ENCODE measurements at regions of chr1 and their contacts with region 1.

Region 1: DNA sequence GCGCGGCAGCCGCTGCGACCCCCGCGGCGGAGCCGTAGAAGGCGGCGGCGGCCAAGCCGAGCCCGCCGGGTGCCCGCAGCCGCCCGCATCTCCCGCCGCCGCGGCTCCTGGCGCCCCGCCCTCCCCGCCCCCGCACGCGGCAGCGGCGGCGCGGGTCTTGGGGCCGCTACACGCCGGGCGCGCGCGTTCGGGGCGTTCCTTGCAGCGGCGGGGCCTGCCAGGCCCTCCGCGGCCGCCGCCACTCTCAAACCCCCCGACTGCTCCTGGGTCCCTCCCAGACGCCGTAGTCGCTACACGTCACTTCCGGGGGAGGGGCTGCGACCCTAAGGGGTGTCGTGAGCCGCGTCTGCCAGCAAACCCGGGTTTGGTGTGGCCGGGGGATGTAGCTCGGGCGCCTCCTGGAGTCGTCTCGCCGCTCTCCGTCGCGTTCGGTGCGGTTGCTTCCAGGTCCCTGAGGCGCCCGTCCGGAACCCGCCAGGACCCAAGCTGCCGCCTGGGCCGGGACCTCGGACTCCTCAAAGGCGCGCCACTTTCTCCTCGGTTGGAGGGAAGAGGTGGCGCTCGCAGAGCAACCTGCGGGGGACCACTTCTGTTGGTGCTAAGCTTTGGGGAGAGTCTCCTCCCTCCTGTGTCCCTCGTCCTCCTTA is at the start of gene ELK4:
- DNase-seq: peak; percentile 99
- H3K4me3 Mint-ChIP-seq: peak within 1 kb of the TSS; percentile 96
- H3K27ac Mint-ChIP-seq: peak within 1 kb of the TSS; percentile 99
- H3K4me1 Mint-ChIP-seq: peaks cover 33% of the 10 kb centered on the region
- H3K27me3 Mint-ChIP-seq: peaks cover 7% of the 10 kb centered on the region
- total RNA-seq, gene ELK4: 68.8 and 80.3 TPM in 2 replicates

Region 2: GRCh38 chr1:205591522-205592351 is 40.1 kb before region 1 on chr1:
- intact Hi-C with region 1: loop called (anchors 1 kb)
- DNase-seq: peak; percentile 80
- H3K4me3 Mint-ChIP-seq: peak overlapping the region; percentile 82
- H3K27ac Mint-ChIP-seq: peak overlapping the region; percentile 75
- H3K4me1 Mint-ChIP-seq: peaks cover 51% of the 10 kb centered on the region
- H3K27me3 Mint-ChIP-seq: no peaks in the 10 kb centered on the region

Region 3: GRCh38 chr1:205610901-205611466 is 20.9 kb before region 1 on chr1:
- intact Hi-C with region 1: loop called (anchors 1 kb)
- DNase-seq: no peak
- H3K4me3 Mint-ChIP-seq: peak overlapping the region; percentile 8
- H3K27ac Mint-ChIP-seq: peak overlapping the region; percentile 72
- H3K4me1 Mint-ChIP-seq: peaks cover 43% of the 10 kb centered on the region
- H3K27me3 Mint-ChIP-seq: no peaks in the 10 kb centered on the region

Region 4: GRCh38 chr1:205750138-205751035 is 118.5 kb after region 1 on chr1 and contains the start of gene NUCKS1:
- intact Hi-C with region 1: loop called (anchors 1 kb)
- DNase-seq: peak; percentile 96
- H3K4me3 Mint-ChIP-seq: peak within 1 kb of the TSS; percentile 99
- H3K27ac Mint-ChIP-seq: peak within 1 kb of the TSS; percentile 98
- H3K4me1 Mint-ChIP-seq: peaks cover 35% of the 10 kb centered on the region
- H3K27me3 Mint-ChIP-seq: peaks cover 3% of the 10 kb centered on the region
- total RNA-seq, gene NUCKS1: 176 and 180 TPM in 2 replicates